Cardiac septum (tissue), 1 donor: ENCODE measurements at regions of chr4 and their contacts with region 1.

Region 1: DNA sequence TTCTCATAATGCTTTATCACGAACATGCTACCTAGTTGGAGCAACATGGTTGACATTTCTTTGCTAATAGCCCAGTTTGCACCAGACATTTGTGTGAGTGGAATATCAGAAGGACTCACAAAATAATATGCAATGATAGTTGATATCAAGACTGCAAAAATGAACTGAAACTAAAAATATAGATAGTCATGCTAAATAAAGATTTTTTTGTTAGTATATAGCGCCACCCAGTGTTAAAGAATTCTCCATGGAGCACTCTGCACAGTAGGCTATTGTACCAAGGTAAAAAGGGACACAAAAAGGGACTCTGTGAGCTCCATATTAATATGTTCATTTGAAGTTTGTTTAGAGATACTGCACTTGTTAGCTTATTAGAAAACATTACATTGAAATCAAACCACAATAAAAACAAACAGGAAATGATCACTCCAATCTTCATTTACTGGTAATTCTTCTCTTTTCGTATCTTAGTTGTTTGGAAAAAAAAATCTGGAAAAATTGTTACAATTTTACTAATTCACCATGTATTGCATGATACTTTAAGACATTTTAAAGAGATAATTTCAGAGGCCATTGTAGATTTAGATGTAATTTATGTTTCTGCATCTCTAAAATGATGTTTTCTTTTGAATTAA is 1509.6 kb downstream of the ADGRL3 start:
- DNase-seq: no peak

Region 2: GRCh38 chr4:62601737-62602136 is 108.0 kb before region 1 on chr4:
- intact Hi-C with region 1: loop called (anchors 5 kb)
- DNase-seq: no peak